ENCODE measurements at regions of chr11 and their contacts with region 1.

Region 1: GRCh38 chr11:132028380-132029240 is 658.2 kb downstream of the NTM start:
- DNase-seq: no peak
- H3K4me3 ChIP-seq: no peak overlapping the region
- H3K27ac ChIP-seq: no peak overlapping the region
- H3K4me1 ChIP-seq: peaks cover 0 to 10% (median 0%) of the 10 kb centered on the region in 4 donors
- H3K27me3 ChIP-seq: no peaks in the 10 kb centered on the region
- CTCF ChIP-seq: peak in 3 of 4 experiments; percentile 42 to 62 (median 59)
- EP300 ChIP-seq: no peak
- POLR2A ChIP-seq: no peak

Region 2: DNA sequence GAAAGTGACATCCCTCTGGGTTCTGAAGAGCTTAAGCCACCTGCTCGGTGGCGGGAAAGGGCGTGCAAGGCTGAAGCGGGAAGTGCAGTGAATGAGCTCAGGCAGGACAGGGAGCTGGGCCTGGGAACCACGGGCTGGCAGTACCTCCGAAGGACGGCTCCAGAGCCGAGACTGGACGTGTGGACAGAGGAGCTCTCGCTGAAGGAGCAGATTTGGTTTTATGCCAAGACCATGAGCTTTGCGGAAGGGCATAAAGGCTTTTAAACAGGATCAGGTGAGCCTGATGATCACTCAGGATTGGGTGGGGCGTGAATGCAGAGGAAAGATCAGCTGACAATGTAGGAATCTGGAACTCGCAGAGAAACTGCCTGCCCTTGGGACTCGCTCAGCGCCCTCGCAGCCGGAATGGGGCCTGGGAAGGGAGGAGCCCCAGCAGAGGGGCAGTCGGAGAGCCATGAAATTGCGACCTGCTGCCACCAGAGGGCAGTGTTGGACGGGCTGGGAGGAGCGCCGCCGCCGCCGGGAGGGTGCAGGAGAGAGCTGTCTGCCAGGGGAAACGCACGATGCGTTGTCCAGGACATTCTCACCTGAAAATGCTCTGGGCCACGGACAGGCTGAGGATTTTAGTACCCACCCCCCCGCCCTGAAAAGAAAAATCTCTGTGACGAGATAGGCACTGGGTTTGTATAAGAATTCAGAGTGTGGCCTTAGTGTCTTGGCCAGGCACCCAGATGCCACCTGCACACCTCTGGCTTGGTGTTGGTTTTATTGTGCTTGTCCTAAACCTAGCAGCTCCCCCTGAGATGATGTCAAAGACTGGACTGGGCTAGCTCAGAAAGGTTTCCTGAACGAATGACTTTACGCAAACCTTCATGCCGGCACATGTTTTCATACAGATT is 333.8 kb before region 1 on chr11:
- intact Hi-C with region 1: loop called (anchors 2 kb)
- DNase-seq: peak; percentile 90
- H3K4me3 ChIP-seq: peak overlapping the region in 2 of 4 donors; percentile 14 to 17
- H3K27ac ChIP-seq: peak overlapping the region in 1 of 4 donors; percentile 12
- H3K4me1 ChIP-seq: peaks cover 0 to 10% (median 9%) of the 10 kb centered on the region in 4 donors
- H3K27me3 ChIP-seq: peaks cover 0 to 14% (median 0%) of the 10 kb centered on the region in 3 donors
- CTCF ChIP-seq: peak; percentile 57 to 95 (median 78)
- EP300 ChIP-seq: no peak
- POLR2A ChIP-seq: no peak

Region 3: DNA sequence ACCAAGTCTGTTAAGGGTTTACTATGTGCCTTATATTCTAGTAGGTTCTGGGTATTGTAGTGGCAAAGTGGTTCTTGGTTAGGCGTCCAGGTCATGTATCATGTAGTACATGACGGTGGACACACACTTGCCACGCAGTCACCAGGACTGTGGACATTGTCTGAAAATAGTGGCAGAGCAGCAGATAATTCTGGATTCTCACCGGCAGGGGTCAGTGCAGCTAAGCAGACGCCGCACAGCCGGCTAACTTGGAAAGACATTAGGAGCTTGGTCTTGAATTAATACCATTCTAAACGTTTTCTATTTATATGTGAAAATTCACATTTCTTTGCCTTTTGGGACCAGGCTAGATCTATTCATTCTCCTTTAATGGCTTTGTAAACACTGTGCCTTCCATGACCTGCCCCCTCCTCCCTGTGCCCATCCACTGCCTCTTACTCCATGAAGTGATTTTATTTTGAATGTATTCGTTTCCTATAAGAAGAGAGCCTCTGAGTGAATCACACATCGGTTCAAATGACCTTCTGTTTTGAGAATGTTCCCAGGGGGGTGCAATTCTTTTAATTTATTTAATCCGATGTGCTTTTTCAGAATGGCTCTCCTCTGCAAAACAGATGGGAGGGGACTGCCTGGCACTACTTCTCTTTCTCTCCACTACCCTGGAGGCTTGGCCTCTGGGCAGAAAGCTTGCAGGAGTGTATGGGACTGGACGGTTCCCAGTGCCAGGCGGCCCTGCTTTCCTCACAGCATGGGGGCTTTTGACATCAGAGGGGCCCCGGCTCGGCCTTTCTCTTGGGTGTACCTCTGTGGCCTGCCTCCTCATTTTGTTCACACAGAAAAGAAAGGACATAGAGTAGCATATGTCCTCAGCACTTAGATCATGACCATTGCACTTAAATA is 280.2 kb before region 1 on chr11:
- intact Hi-C with region 1: loop called (anchors 5 kb)
- DNase-seq: peak; percentile 72
- H3K4me3 ChIP-seq: no peak overlapping the region
- H3K27ac ChIP-seq: no peak overlapping the region
- H3K4me1 ChIP-seq: no peaks in the 10 kb centered on the region
- H3K27me3 ChIP-seq: no peaks in the 10 kb centered on the region
- CTCF ChIP-seq: peak; percentile 14 to 78 (median 56)
- EP300 ChIP-seq: no peak
- POLR2A ChIP-seq: no peak